Left ventricle myocardium inferior (tissue), 1 donor: ENCODE measurements at regions of chr1 and their contacts with region 1.

Region 1: DNA sequence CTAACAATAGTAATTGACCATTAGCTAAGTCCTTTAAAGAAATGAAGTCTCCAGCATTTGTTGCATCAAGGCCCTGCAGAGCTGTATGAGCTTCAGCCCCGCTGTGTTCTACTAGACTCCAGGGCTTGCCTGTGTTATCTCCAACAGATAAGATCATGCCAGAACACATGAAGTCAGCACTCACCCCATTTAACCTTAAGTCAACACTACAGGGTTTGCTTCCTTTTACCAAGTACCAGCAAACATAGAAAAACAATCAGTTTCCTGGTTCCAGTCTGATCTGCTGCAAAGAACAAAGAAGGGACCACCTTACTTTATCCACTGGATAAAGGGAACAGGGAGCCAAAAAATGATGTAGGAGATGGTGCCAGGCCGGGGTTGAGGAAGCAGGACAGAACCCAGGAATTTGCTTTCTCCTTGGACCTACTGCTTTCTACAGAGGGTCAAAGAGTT is 41.3 kb upstream of the ENAH start:
- DNase-seq: peak; percentile 26
- H3K4me3 ChIP-seq: no peak overlapping the region
- H3K27ac ChIP-seq: peak overlapping the region; percentile 73
- H3K4me1 ChIP-seq: peaks cover 72% of the 10 kb centered on the region
- H3K27me3 ChIP-seq: no peaks in the 10 kb centered on the region
- CTCF ChIP-seq: no peak

Region 2: DNA sequence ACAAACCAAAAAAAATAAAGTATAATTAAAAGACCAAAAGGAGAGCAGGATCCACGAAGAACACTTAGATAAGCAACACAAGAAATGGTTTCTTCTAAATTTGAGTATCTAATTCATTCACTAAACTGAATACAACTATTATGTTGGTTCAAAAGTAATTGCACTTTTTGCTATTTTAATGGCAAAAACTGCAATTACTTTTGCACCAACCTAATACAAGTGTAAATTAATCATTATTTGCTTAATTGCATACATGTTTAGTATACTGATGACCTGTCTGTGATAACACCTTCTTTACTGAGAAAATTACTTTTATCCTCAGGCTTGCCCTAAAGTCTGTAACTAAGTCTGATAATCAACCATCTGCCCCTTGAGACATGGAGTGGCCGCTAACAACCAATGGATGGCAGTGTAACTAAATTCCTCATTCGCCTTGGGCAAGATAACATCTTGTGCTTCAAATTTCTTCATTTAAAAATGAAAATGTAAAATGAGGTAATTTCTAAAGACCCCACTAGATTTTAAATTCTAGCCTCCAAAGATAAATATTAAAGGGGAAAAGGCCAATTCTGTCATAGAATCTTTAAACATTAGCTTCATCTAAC is 126.5 kb before region 1 on chr1:
- intact Hi-C with region 1: no loop called
- DNase-seq: no peak
- H3K4me3 ChIP-seq: no peak overlapping the region
- H3K27ac ChIP-seq: no peak overlapping the region
- H3K4me1 ChIP-seq: peaks cover 45% of the 10 kb centered on the region
- H3K27me3 ChIP-seq: no peaks in the 10 kb centered on the region
- CTCF ChIP-seq: peak; percentile 17

Region 3: GRCh38 chr1:225652729-225653462 is 41.3 kb before region 1 on chr1 and contains the start of gene ENAH:
- intact Hi-C with region 1: no loop called
- DNase-seq: peak; percentile 89
- H3K4me3 ChIP-seq: peak within 1 kb of the TSS; percentile 91
- H3K27ac ChIP-seq: peak within 1 kb of the TSS; percentile 99
- H3K4me1 ChIP-seq: peaks cover 64% of the 10 kb centered on the region
- H3K27me3 ChIP-seq: no peaks in the 10 kb centered on the region
- CTCF ChIP-seq: no peak
- total RNA-seq, gene ENAH: 78.6 TPM

Region 4: GRCh38 chr1:225766967-225767633 is 72.9 kb after region 1 on chr1:
- intact Hi-C with region 1: loop called (anchors 10 kb)
- DNase-seq: no peak
- H3K4me3 ChIP-seq: no peak overlapping the region
- H3K27ac ChIP-seq: peak overlapping the region; percentile 85
- H3K4me1 ChIP-seq: peaks cover 84% of the 10 kb centered on the region
- H3K27me3 ChIP-seq: no peaks in the 10 kb centered on the region
- CTCF ChIP-seq: no peak

Region 5: GRCh38 chr1:225911191-225912130 is 217.3 kb after region 1 on chr1:
- intact Hi-C with region 1: no loop called
- DNase-seq: peak; percentile 69
- H3K4me3 ChIP-seq: peak overlapping the region; percentile 43
- H3K27ac ChIP-seq: no peak overlapping the region
- H3K4me1 ChIP-seq: peaks cover 10% of the 10 kb centered on the region
- H3K27me3 ChIP-seq: no peaks in the 10 kb centered on the region
- CTCF ChIP-seq: peak; percentile 98